ENCODE measurements at regions of chr19 and their contacts with region 1.

Region 1: GRCh38 chr19:36081385-36081784 is 26.7 kb downstream of the WDR62 start:
- DNase-seq: no peak
- H3K4me3 ChIP-seq: no peak overlapping the region
- H3K27ac ChIP-seq: no peak overlapping the region
- H3K4me1 ChIP-seq: no peaks in the 10 kb centered on the region
- H3K27me3 ChIP-seq: no peaks in the 10 kb centered on the region
- CTCF ChIP-seq: no peak
- EP300 ChIP-seq: no peak
- POLR2A ChIP-seq: no peak

Region 2: DNA sequence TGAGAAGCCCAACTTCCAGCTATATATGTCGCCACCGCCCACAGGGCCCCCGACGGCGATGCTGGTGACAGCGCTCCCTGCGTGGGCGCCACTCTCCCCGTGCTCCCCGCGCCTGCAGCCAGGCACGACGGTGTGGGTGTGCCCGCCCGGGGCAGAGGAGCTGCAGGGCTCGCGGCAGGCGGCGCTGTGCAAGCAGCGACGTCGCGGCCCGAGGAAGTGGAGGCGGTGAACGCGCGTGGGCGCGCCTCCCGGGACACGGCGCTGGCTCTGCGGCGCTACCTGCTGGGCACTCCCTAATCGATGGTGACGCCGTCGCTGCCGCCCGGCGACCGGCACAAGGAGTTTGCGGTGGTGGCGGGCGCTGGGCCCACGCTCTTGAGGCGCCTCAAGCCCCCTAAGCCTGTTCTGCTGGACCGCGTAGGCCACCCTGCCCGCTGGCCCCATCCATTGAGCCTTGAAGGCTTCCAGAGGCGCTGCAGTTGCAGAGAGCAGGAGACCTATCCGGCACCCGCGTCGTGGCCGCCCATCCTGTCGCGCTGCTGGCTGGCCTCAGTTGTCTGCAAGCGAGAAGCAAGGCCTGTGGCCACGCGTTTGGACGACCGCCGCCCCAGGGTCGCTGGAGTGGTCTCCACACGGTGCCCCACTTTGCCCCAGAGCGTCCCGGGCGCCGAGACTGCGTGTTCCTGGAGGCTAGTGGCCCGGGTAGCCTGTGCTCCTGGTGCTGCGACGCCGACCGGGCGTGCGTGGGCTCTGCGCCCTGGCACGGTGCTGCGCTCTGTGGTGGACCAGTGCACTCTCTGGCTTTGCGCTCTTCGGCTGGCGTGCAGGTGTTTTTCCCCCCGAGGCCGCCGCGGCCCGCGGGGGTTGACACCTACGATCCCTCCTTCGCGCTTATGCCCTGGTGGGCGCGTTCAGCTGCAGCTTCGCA is 122.1 kb before region 1 on chr19:
- in situ Hi-C with region 1: no loop called
- intact Hi-C with region 1: loop called (anchors 10 kb)
- DNase-seq: peak; percentile 56
- H3K4me3 ChIP-seq: peak overlapping the region in 2 of 4 donors; percentile 8 to 21
- H3K27ac ChIP-seq: no peak overlapping the region
- H3K4me1 ChIP-seq: peaks cover 0 to 11% (median 4%) of the 10 kb centered on the region in 4 donors
- H3K27me3 ChIP-seq: peaks cover 49% of the 10 kb centered on the region
- CTCF ChIP-seq: peak in 4 of 5 experiments; percentile 14 to 30 (median 17)
- EP300 ChIP-seq: no peak
- POLR2A ChIP-seq: no peak

Measured in transverse colon (tissue), 4 donors.